ENCODE measurements at regions of chr1 and their contacts with region 1.

Region 1: GRCh38 chr1:26399034-26399433 is 11.6 kb upstream of the LIN28A start:
- DNase-seq: no peak
- H3K4me3 ChIP-seq: no peak overlapping the region
- H3K4me3 Mint-ChIP-seq: no peak overlapping the region
- H3K27ac ChIP-seq: no peak overlapping the region
- H3K27ac Mint-ChIP-seq: no peak overlapping the region
- H3K4me1 ChIP-seq: no peaks in the 10 kb centered on the region
- H3K4me1 Mint-ChIP-seq: peaks cover 3 to 6% (median 5%) of the 10 kb centered on the region in 4 donors
- H3K27me3 ChIP-seq: no peaks in the 10 kb centered on the region
- H3K27me3 Mint-ChIP-seq: peaks cover 8 to 9% of the 10 kb centered on the region in 2 donors

Region 2: GRCh38 chr1:26084091-26084561 is 314.9 kb before region 1 on chr1:
- CTCF ChIA-PET with region 1: no interaction called
- POLR2A ChIA-PET with region 1: no interaction called
- intact Hi-C with region 1: no loop called
- DNase-seq: no peak
- H3K4me3 ChIP-seq: no peak overlapping the region
- H3K4me3 Mint-ChIP-seq: no peak overlapping the region
- H3K27ac ChIP-seq: no peak overlapping the region
- H3K27ac Mint-ChIP-seq: no peak overlapping the region
- H3K4me1 ChIP-seq: no peaks in the 10 kb centered on the region
- H3K4me1 Mint-ChIP-seq: no peaks in the 10 kb centered on the region
- H3K27me3 ChIP-seq: peaks cover 4% of the 10 kb centered on the region
- H3K27me3 Mint-ChIP-seq: peaks cover 10 to 19% of the 10 kb centered on the region in 2 donors

Region 3: GRCh38 chr1:26169669-26170471 is 229.2 kb before region 1 on chr1 and contains the start of gene ZNF593:
- CTCF ChIA-PET with region 1: interaction called, 14 read pairs
- POLR2A ChIA-PET with region 1: no interaction called
- intact Hi-C with region 1: loop called (anchors 5 kb)
- DNase-seq: peak; percentile 74 to 81 (median 77)
- H3K4me3 ChIP-seq: peak within 1 kb of the TSS; percentile 52 to 90
- H3K4me3 Mint-ChIP-seq: peak within 1 kb of the TSS; percentile 83 to 91 (median 88)
- H3K27ac ChIP-seq: peak within 1 kb of the TSS; percentile 85
- H3K27ac Mint-ChIP-seq: peak within 1 kb of the TSS; percentile 71 to 94 (median 93)
- H3K4me1 ChIP-seq: peaks cover 20% of the 10 kb centered on the region
- H3K4me1 Mint-ChIP-seq: peaks cover 4 to 25% (median 16%) of the 10 kb centered on the region in 4 donors
- H3K27me3 ChIP-seq: no peaks in the 10 kb centered on the region
- H3K27me3 Mint-ChIP-seq: no peaks in the 10 kb centered on the region
- total RNA-seq, gene ZNF593: 10.7 to 12.4 TPM

Region 4: DNA sequence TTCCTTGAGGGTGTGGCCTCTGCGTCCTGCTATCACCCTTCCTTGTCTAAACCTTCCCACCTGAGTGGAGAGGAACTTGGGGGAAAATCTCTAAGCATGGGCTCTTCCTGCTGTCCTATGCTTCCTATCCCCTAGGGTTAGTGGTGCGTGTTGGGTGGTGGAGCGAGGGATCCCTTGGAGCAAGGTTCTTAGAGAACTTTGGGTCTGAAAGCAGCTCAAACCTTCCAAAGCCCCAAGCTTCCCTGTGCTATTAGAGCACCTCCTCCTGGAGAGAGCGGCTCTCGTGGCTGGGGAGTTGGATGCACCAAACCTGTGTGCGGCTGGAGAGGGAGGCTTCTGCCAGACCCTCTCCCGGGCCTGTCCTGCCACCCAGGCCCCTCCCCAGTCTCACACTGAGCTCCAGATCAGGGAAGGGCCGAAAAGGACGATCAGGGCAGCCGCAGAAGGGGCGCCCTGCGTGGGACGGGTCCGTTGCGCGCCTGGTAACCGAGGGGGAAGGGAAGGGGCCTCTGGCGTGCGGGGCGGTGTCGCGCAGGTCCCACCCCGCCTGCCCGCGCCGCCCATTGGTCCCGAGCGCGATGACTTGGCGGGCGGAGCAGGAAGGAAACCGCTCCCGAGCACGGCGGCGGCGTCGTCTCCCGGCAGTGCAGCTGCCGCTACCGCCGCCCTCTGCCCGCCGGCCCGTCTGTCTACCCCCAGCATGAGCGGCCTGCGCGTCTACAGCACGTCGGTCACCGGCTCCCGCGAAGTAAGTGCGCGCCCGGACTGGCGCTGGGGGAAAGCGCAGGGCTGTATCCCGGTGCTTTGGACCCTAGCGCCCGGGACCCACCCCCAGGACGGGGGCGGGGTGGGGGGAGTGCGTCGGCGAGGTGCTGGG is 119.3 kb before region 1 on chr1 and contains the start of gene SH3BGRL3:
- CTCF ChIA-PET with region 1: interaction called, 28 read pairs
- POLR2A ChIA-PET with region 1: interaction called, 3 read pairs
- intact Hi-C with region 1: loop called (anchors 1 kb)
- DNase-seq: peak; percentile 83 to 88 (median 86)
- H3K4me3 ChIP-seq: peak within 1 kb of the TSS; percentile 50 to 92
- H3K4me3 Mint-ChIP-seq: peak within 1 kb of the TSS; percentile 85 to 96 (median 90)
- H3K27ac ChIP-seq: peak within 1 kb of the TSS; percentile 82
- H3K27ac Mint-ChIP-seq: peak within 1 kb of the TSS; percentile 94 to 98 (median 97)
- H3K4me1 ChIP-seq: peaks cover 88% of the 10 kb centered on the region
- H3K4me1 Mint-ChIP-seq: peaks cover 58 to 90% (median 76%) of the 10 kb centered on the region in 4 donors
- H3K27me3 ChIP-seq: no peaks in the 10 kb centered on the region
- H3K27me3 Mint-ChIP-seq: no peaks in the 10 kb centered on the region
- total RNA-seq, gene SH3BGRL3: 293 to 305 TPM

Region 5: GRCh38 chr1:26284597-26285360 is 114.3 kb before region 1 on chr1:
- CTCF ChIA-PET with region 1: interaction called, 23 read pairs
- POLR2A ChIA-PET with region 1: no interaction called
- intact Hi-C with region 1: no loop called
- DNase-seq: peak; percentile 91 to 99 (median 92)
- H3K4me3 ChIP-seq: peak overlapping the region; percentile 38 to 50
- H3K4me3 Mint-ChIP-seq: peak overlapping the region; percentile 82 to 94 (median 89)
- H3K27ac ChIP-seq: peak overlapping the region; percentile 91
- H3K27ac Mint-ChIP-seq: peak overlapping the region; percentile 94 to 100 (median 99)
- H3K4me1 ChIP-seq: peaks cover 95% of the 10 kb centered on the region
- H3K4me1 Mint-ChIP-seq: peaks cover 63 to 96% (median 81%) of the 10 kb centered on the region in 4 donors
- H3K27me3 ChIP-seq: no peaks in the 10 kb centered on the region
- H3K27me3 Mint-ChIP-seq: no peaks in the 10 kb centered on the region

Region 6: DNA sequence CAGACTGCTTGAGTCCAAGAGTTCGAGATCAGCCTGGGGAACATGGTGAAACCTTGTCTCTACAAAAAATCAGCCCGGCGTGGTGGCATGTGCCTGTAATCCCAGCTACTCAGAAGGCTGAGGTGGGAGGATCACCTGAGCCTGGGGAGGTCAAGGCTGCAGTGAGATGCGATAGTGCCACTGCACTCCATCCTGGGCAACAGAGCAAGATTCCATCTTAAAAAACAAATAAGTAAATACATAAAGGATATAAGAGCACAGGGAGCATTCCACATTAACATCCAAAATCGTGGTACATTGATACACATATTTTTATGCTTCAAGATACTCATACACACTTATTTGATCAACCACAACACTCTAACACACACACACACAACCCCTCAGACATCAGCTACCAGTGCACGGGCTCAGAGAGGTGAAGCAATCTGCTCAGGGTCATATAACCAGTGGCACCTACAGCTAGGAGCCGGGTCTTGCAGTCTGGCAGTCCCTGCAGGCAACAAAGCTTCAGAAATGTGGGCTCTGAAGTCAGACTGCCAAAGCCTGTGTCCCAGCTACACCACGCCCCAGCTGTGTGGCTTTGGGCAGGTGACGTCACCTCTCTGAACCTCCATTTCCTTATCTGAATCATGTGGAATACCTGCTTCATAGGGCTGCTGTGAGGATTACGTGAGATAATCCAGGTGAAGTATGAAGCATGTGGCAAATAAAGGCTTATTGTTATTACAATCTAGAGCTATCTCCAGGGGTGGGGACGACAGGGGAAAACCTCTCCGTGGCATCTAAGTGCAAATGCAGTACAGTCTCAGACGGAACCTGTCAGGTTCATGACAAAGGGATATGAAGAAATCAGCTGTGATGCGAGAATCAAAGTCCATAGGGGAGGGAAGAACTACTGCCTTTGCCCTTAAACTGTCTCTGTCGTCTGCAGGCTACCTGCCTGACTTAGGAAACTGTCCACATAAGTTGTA is 40.3 kb before region 1 on chr1:
- CTCF ChIA-PET with region 1: interaction called, 121 read pairs
- POLR2A ChIA-PET with region 1: interaction called, 3 read pairs
- intact Hi-C with region 1: loop called (anchors 1 kb)
- DNase-seq: peak; percentile 79 to 95 (median 81)
- H3K4me3 ChIP-seq: peak overlapping the region in 1 of 2 donors; percentile 44
- H3K4me3 Mint-ChIP-seq: peak overlapping the region; percentile 58 to 88 (median 74)
- H3K27ac ChIP-seq: peak overlapping the region; percentile 40
- H3K27ac Mint-ChIP-seq: peak overlapping the region; percentile 79 to 97 (median 94)
- H3K4me1 ChIP-seq: peaks cover 56% of the 10 kb centered on the region
- H3K4me1 Mint-ChIP-seq: peaks cover 27 to 70% (median 41%) of the 10 kb centered on the region in 4 donors
- H3K27me3 ChIP-seq: no peaks in the 10 kb centered on the region
- H3K27me3 Mint-ChIP-seq: no peaks in the 10 kb centered on the region

Region 7: DNA sequence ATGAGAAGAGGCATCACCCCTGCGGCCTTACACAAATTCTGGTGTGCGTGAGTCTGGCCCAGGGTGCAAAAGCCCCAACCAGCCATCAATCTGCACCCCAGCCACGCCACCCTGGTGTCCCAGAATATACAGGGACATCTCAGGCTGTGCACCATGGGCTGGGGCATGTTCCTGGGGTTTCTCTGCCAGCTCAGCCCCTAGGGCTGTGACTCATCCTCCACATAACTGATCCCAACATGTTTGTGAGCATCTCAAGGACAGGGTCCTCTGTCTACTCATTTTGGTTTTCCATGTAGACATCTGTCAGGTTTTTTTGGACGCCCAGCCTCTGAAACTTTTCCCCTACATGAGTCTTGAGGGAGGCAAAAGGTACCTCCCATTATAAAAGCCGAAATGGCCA is 27.0 kb before region 1 on chr1:
- CTCF ChIA-PET with region 1: interaction called, 8 read pairs
- POLR2A ChIA-PET with region 1: interaction called, 3 read pairs
- intact Hi-C with region 1: loop called (anchors 1 kb)
- DNase-seq: no peak
- H3K4me3 ChIP-seq: peak overlapping the region in 1 of 2 donors; percentile 18
- H3K4me3 Mint-ChIP-seq: peak overlapping the region in 7 of 8 donors; percentile 8 to 81 (median 61)
- H3K27ac ChIP-seq: no peak overlapping the region
- H3K27ac Mint-ChIP-seq: peak overlapping the region; percentile 75 to 96 (median 86)
- H3K4me1 ChIP-seq: peaks cover 94% of the 10 kb centered on the region
- H3K4me1 Mint-ChIP-seq: peaks cover 60 to 86% (median 73%) of the 10 kb centered on the region in 4 donors
- H3K27me3 ChIP-seq: no peaks in the 10 kb centered on the region
- H3K27me3 Mint-ChIP-seq: no peaks in the 10 kb centered on the region

Region 8: DNA sequence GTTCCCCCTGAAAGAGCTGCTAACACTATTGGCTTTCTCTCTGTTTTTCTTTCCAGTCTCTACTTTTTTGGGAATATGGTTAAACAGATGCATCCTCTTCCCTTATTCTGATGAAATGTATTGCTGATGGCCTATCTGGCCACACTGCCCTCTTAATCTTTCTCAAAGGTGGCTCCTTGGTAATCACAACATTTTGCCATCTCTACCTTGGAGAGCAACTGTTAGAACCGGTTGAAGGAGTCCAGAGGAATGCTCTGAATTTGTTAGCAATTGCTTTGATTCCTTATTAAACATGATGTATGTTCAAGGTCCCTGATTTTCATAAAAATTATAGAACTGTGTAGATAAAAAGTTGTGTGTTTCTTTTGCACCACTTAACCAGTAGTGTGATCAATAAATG is 246.7 kb after region 1 on chr1:
- CTCF ChIA-PET with region 1: no interaction called
- POLR2A ChIA-PET with region 1: no interaction called
- intact Hi-C with region 1: no loop called
- DNase-seq: no peak
- H3K4me3 ChIP-seq: no peak overlapping the region
- H3K4me3 Mint-ChIP-seq: no peak overlapping the region
- H3K27ac ChIP-seq: no peak overlapping the region
- H3K27ac Mint-ChIP-seq: peak overlapping the region in 1 of 7 donors; percentile 50
- H3K4me1 ChIP-seq: no peaks in the 10 kb centered on the region
- H3K4me1 Mint-ChIP-seq: no peaks in the 10 kb centered on the region
- H3K27me3 ChIP-seq: no peaks in the 10 kb centered on the region
- H3K27me3 Mint-ChIP-seq: no peaks in the 10 kb centered on the region

Measured in CD4-positive, alpha-beta memory T cell (primary cell).